ENCODE measurements at regions of chr2 and their contacts with region 1.

Region 1: GRCh38 chr2:160375802-160376469 is 117.7 kb downstream of the RBMS1 start:
- DNase-seq: peak in 2 of 14 experiments; percentile 41 to 47
- ATAC-seq: peak; percentile 79
- H3K4me3 ChIP-seq: no peak overlapping the region
- H3K4me3 Mint-ChIP-seq: peak overlapping the region; percentile 62
- H3K27ac ChIP-seq: no peak overlapping the region
- H3K27ac Mint-ChIP-seq: peak overlapping the region; percentile 72
- H3K4me1 ChIP-seq: peaks cover 63% of the 10 kb centered on the region
- H3K4me1 Mint-ChIP-seq: peaks cover 98% of the 10 kb centered on the region
- H3K27me3 ChIP-seq: no peaks in the 10 kb centered on the region
- H3K27me3 Mint-ChIP-seq: no peaks in the 10 kb centered on the region
- CTCF ChIP-seq: no peak

Region 2: GRCh38 chr2:160324161-160324800 is 51.7 kb before region 1 on chr2:
- CTCF ChIA-PET with region 1: no interaction called
- POLR2A ChIA-PET with region 1: no interaction called
- intact Hi-C with region 1: no loop called
- DNase-seq: peak; percentile 12 to 66 (median 29)
- ATAC-seq: no peak
- H3K4me3 ChIP-seq: no peak overlapping the region
- H3K4me3 Mint-ChIP-seq: peak overlapping the region; percentile 12
- H3K27ac ChIP-seq: no peak overlapping the region
- H3K27ac Mint-ChIP-seq: peak overlapping the region; percentile 14
- H3K4me1 ChIP-seq: peaks cover 37% of the 10 kb centered on the region
- H3K4me1 Mint-ChIP-seq: peaks cover 93% of the 10 kb centered on the region
- H3K27me3 ChIP-seq: no peaks in the 10 kb centered on the region
- H3K27me3 Mint-ChIP-seq: no peaks in the 10 kb centered on the region
- CTCF ChIP-seq: peak; percentile 76

Region 3: DNA sequence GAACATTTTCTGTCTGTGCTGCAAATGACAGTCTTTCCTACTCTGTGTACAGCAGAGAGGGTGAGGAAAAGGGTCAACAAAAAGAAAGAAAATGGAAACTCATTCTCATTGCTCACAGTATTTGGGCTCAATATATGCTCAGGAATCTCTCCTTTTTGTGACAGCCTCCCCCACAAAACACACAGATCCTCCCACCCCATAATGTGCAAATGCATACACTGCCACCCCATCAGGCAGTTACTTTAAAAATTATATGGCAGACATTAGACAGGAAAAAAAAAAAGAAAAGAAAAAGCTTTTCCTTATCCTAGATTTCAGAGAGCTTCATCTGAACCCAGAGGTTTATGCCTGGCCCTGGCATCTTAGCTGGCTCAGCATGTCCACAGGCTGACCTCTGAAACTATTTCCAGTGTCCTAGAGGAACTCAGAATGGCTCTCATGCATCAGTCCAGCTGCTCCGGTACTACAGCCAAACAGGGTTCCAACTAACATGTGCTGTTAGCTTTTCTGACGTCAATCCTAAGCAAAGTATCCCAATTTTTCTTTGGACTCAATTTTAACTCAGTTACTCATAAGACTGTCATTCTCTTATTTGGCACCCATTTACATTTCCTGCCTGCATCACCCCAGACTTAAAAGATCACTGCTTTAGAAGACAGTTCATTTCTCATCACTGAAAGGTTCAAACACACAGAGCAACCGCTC is 11.8 kb after region 1 on chr2:
- CTCF ChIA-PET with region 1: no interaction called
- POLR2A ChIA-PET with region 1: interaction called, 11 read pairs
- intact Hi-C with region 1: no loop called
- DNase-seq: no peak
- ATAC-seq: peak; percentile 45
- H3K4me3 ChIP-seq: no peak overlapping the region
- H3K4me3 Mint-ChIP-seq: peak overlapping the region; percentile 54
- H3K27ac ChIP-seq: no peak overlapping the region
- H3K27ac Mint-ChIP-seq: peak overlapping the region; percentile 67
- H3K4me1 ChIP-seq: peaks cover 70% of the 10 kb centered on the region
- H3K4me1 Mint-ChIP-seq: peaks cover 93% of the 10 kb centered on the region
- H3K27me3 ChIP-seq: no peaks in the 10 kb centered on the region
- H3K27me3 Mint-ChIP-seq: no peaks in the 10 kb centered on the region
- CTCF ChIP-seq: no peak